A673 (cell line): ENCODE measurements at regions of chr2 and their contacts with region 1.

Region 1: GRCh38 chr2:120415060-120415459 is 69.1 kb downstream of the INHBB start:
- DNase-seq: no peak
- H3K4me3 ChIP-seq: no peak overlapping the region
- H3K27ac ChIP-seq: no peak overlapping the region
- H3K4me1 ChIP-seq: no peaks in the 10 kb centered on the region
- H3K27me3 ChIP-seq: no peaks in the 10 kb centered on the region
- CTCF ChIP-seq: no peak

Region 2: GRCh38 chr2:120294008-120294340 is 121.1 kb before region 1 on chr2:
- CTCF ChIA-PET with region 1: no interaction called
- POLR2A ChIA-PET with region 1: no interaction called
- intact Hi-C with region 1: no loop called
- DNase-seq: no peak
- H3K4me3 ChIP-seq: no peak overlapping the region
- H3K27ac ChIP-seq: no peak overlapping the region
- H3K4me1 ChIP-seq: no peaks in the 10 kb centered on the region
- H3K27me3 ChIP-seq: no peaks in the 10 kb centered on the region
- CTCF ChIP-seq: no peak

Region 3: GRCh38 chr2:120396013-120396885 is 18.8 kb before region 1 on chr2:
- CTCF ChIA-PET with region 1: no interaction called
- POLR2A ChIA-PET with region 1: interaction called, 10 read pairs
- intact Hi-C with region 1: no loop called
- DNase-seq: peak; percentile 54
- H3K4me3 ChIP-seq: no peak overlapping the region
- H3K27ac ChIP-seq: no peak overlapping the region
- H3K4me1 ChIP-seq: peaks cover 14% of the 10 kb centered on the region
- H3K27me3 ChIP-seq: no peaks in the 10 kb centered on the region
- CTCF ChIP-seq: no peak

Region 4: GRCh38 chr2:121266543-121267106 is 851.6 kb after region 1 on chr2:
- CTCF ChIA-PET with region 1: no interaction called
- POLR2A ChIA-PET with region 1: no interaction called
- intact Hi-C with region 1: no loop called
- DNase-seq: no peak
- H3K4me3 ChIP-seq: no peak overlapping the region
- H3K27ac ChIP-seq: no peak overlapping the region
- H3K4me1 ChIP-seq: no peaks in the 10 kb centered on the region
- H3K27me3 ChIP-seq: peaks cover 2% of the 10 kb centered on the region
- CTCF ChIP-seq: no peak

Region 5: DNA sequence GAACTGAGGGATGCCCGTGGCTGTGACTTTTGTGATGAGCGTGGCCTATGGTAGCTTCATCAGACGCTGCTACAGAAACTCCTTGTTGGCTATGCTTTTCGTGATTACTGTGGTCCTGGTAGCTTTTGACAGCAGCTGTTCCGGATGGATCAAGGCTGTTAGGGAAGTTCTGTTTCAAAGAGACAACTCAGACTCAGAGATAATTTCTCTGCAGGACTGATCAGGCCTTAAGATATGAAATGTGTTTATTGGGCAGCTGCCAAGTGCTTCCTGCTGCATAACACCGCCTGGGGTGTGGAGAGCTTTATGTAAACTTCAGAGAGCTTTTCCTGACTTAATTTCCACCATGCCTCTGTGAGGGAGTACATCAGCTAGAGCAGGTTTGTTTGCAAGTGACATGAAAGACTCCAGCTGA is 1584.2 kb after region 1 on chr2:
- CTCF ChIA-PET with region 1: no interaction called
- POLR2A ChIA-PET with region 1: no interaction called
- intact Hi-C with region 1: no loop called
- DNase-seq: peak; percentile 97
- H3K4me3 ChIP-seq: no peak overlapping the region
- H3K27ac ChIP-seq: peak overlapping the region; percentile 85
- H3K4me1 ChIP-seq: peaks cover 43% of the 10 kb centered on the region
- H3K27me3 ChIP-seq: no peaks in the 10 kb centered on the region
- CTCF ChIP-seq: no peak